Activated B cell treated with CpG ODN at 0.5 μM for 24 hours (primary cell): ENCODE measurements at regions of chr13 and their contacts with region 1.

Region 1: DNA sequence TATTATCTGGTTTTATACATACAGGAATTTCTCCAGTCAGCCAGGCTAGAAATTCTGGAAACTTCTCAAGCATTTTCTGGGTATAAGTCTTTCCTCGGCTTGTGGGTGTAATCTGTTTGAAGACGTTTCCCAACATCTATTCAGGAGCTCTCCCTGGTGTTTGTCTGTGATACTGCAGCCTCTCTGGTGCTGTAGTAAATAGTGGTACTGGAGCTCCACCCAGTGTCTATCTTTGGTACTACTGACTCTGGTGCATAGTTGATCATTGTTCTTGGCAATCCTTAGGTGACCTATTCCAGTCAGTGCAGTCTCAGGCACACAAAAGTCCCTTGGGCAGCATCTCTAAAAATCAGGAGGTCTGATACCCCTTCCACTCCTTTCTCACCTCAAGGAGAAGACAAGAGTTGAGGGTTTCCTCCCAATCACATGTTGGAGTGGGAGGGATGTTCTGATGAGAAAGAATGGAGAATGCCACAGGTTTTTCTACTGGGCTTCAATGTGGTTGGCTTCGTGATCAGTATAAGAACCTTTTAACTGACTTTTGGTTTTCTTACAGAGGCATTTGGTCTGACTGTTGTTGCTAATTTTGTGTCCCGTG is 115.5 kb downstream of the CYSLTR2 start:
- DNase-seq: peak; percentile 25
- ATAC-seq: peak; percentile 100
- H3K4me3 Mint-ChIP-seq: no peak overlapping the region
- H3K27ac Mint-ChIP-seq: no peak overlapping the region
- H3K4me1 Mint-ChIP-seq: peaks cover 2% of the 10 kb centered on the region
- H3K27me3 Mint-ChIP-seq: peaks cover 17% of the 10 kb centered on the region
- CTCF ChIP-seq: peak; percentile 38

Region 2: DNA sequence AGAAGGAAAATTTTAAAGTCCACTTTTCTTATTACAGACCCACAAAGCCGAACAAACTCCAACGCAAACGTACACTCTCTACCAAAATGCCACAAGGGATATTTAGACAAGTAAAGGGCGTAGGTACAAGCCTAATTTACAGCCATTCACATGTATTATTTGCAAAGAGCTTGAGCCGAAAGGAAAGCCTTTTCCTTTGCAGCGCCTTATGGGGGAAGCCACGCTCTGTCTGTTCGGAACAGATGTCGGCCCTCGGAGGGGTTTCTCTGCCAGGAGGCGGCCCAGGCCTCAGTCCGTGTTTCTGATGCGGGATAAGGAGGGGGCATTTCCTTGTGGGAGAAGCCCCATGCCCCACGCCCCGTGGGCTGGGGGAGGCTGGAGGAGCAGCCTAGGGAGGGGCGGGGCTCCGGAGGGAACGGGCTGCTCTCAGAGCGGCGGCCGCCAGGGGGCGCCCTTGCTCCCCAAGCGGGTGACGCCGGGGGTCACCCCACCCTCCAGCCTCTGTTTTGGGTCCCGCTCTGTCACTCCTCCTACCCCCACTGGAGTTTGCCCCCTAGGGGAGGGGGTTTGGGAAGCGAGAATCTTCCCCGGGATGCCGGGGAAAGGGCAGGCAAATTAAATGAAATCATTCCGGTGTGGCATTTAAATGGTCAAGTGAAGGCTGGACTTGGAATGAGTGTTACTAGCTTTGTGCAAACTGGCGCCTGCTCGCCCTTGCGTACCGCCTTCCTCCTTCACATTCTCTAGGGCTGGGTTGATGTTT is 1875.2 kb before region 1 on chr13:
- CTCF ChIA-PET with region 1: interaction called, 8 read pairs
- POLR2A ChIA-PET with region 1: no interaction called
- intact Hi-C with region 1: loop called (anchors 1 kb)
- DNase-seq: peak; percentile 67
- ATAC-seq: peak; percentile 91
- H3K4me3 Mint-ChIP-seq: peak overlapping the region; percentile 74
- H3K27ac Mint-ChIP-seq: no peak overlapping the region
- H3K4me1 Mint-ChIP-seq: peaks cover 24% of the 10 kb centered on the region
- H3K27me3 Mint-ChIP-seq: peaks cover 32% of the 10 kb centered on the region
- CTCF ChIP-seq: peak; percentile 72

Region 3: DNA sequence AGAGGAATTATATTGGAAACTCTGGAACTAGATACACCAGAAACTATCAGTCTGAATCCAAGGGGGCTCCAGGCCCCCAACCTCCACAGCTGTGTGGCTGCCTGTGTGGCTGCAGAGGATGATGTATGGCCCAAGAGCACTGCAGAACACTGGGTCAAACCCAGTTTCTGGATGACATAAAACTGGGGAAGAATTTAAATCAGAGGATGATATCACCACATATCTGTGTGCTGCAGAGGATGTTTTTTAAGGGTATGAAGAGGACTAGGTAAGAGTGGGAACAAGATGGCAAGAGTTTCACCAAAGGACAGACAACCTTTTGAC is 994.6 kb before region 1 on chr13:
- CTCF ChIA-PET with region 1: no interaction called
- POLR2A ChIA-PET with region 1: no interaction called
- intact Hi-C with region 1: loop called (anchors 1 kb)
- DNase-seq: no peak
- ATAC-seq: no peak
- H3K4me3 Mint-ChIP-seq: no peak overlapping the region
- H3K27ac Mint-ChIP-seq: no peak overlapping the region
- H3K4me1 Mint-ChIP-seq: no peaks in the 10 kb centered on the region
- H3K27me3 Mint-ChIP-seq: peaks cover 9% of the 10 kb centered on the region
- CTCF ChIP-seq: no peak

Region 4: DNA sequence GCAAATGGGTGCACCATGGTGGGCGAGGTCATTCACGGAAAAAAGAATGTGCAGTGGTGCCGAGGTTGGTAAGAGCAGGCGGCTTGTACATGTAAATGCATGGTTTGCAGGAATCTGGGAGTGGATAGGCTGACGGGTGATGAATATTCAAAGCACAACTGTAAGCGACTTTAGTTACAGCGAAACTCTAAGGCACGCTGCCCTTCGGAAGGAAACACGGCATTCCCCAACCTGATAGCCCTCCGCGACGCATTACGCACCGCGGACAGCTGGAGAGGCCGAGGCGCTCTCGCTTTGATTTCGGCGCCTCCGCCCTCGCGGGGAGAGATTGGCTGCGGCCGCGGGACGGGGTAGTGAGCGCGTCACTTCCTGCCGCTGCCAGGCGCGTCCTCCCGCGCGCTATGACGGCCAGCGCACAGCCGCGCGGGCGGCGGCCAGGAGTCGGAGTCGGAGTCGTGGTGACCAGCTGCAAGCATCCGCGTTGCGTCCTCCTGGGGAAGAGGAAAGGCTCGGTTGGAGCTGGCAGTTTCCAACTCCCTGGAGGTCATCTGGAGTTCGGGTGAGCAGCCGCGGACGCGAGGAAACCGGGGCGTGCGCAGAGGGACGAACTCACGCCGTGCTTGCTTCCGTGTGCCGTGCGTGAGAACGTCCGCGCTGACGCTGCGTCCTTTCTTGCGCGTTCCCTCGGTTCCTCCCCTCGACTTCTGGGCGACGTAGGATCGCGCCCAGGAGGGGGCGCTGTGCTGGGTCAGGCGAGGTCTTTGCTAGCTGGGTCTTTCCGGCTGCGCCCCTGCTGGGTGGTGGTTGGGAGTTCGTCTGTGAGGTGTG is 731.6 kb before region 1 on chr13 and contains the start of gene NUDT15:
- CTCF ChIA-PET with region 1: interaction called, 15 read pairs
- POLR2A ChIA-PET with region 1: no interaction called
- intact Hi-C with region 1: loop called (anchors 1 kb)
- DNase-seq: peak; percentile 92
- ATAC-seq: peak; percentile 94
- H3K4me3 Mint-ChIP-seq: peak within 1 kb of the TSS; percentile 93
- H3K27ac Mint-ChIP-seq: peak within 1 kb of the TSS; percentile 96
- H3K4me1 Mint-ChIP-seq: peaks cover 29% of the 10 kb centered on the region
- H3K27me3 Mint-ChIP-seq: no peaks in the 10 kb centered on the region
- CTCF ChIP-seq: peak; percentile 83
- total RNA-seq, gene NUDT15: 5.5 and 6.2 TPM in 2 replicates

Region 5: DNA sequence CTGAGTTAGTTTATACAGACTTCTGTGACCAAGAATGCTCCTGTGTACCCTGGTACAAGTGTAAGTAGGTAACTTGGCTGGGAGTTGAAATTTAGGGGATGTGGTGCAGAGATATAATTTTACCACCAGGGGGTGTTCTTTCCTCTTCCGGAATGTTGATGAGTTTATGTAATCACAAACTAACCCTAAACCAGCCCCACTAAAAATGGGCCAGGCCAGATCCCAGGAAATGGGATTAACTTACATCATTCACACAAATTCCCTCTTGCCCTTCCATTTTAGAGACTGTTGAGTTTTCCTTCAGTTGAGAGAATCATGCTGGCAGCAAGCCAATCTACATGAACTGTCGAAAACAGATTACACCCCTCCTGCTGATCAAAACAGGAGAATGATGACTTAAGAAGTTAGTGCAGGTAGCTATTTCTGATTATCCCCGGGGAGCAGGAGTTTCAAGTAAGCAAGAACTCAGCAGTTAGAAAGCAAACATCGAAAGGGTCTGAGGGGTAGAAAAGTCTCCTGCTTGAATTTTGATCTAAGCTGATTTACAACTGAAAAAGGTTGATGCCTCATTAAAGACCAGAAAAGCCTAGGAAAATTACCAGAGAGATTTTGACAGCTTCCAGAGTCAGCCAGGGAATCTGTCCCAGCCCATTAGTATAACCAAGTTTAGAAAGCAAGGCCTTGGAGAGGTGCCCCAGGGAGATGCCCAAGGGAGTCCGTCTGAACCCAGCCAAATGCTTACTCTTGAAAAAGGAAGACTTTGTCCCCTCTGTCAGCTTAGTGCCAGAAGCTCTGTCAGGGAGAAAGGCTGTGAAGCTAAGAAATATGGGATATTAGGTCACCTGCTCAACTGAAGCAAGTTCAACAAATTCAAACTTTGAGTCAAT is 642.0 kb before region 1 on chr13:
- CTCF ChIA-PET with region 1: interaction called, 18 read pairs
- POLR2A ChIA-PET with region 1: no interaction called
- intact Hi-C with region 1: loop called (anchors 1 kb)
- DNase-seq: no peak
- ATAC-seq: peak; percentile 90
- H3K4me3 Mint-ChIP-seq: no peak overlapping the region
- H3K27ac Mint-ChIP-seq: peak overlapping the region; percentile 9
- H3K4me1 Mint-ChIP-seq: peaks cover 7% of the 10 kb centered on the region
- H3K27me3 Mint-ChIP-seq: no peaks in the 10 kb centered on the region
- CTCF ChIP-seq: peak; percentile 74

Region 6: DNA sequence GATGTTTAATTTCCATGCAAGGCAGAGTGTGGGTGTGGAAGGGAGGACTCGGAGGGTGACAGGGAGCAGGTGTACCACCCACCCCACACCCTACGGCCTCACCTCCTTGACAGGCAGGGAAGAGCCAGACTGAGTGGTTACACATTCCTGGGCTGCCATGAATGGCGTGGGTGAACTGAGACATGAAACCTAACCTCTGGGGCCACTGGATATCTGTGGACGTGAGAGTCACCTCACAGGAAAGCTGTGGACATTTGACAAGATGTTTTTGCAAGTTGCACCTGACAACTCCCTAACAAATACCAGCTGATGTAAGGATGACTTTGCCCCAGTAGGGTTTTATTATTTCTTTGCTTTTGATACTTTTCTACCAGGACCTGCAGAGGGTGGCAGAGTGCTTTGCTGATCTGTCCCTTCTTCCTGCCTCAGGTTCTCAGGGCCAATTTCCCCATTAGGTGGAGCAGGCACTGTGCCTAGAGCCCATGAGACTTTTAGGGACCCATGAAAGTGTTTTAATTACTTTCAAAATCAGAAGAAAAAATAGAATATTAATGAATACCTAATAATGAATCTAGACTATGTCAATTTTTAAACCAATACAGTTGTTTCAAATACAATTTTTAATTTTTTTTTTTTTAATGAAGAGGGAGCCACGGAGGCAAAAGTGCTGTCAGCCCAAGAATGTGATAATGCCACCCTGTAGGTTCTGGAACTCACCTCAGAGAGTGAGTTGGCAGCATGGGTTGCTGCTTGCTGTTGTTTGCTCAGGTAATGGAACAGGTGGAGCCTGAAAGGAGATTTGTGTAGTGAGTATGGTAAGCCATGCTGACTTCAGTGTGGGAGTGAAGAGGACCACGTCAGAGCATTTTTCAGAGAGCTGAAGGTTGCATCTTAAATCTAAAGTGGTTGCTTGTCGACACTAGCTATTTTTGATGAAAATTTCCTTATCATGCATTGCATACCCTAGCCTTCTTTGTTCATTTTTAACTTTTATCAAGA is 173.5 kb before region 1 on chr13:
- CTCF ChIA-PET with region 1: interaction called, 5 read pairs
- POLR2A ChIA-PET with region 1: no interaction called
- intact Hi-C with region 1: loop called (anchors 1 kb)
- DNase-seq: no peak
- ATAC-seq: no peak
- H3K4me3 Mint-ChIP-seq: no peak overlapping the region
- H3K27ac Mint-ChIP-seq: no peak overlapping the region
- H3K4me1 Mint-ChIP-seq: no peaks in the 10 kb centered on the region
- H3K27me3 Mint-ChIP-seq: peaks cover 21% of the 10 kb centered on the region
- CTCF ChIP-seq: no peak

Region 7: GRCh38 chr13:48783181-48783630 is 14.0 kb after region 1 on chr13:
- CTCF ChIA-PET with region 1: no interaction called
- POLR2A ChIA-PET with region 1: no interaction called
- intact Hi-C with region 1: no loop called
- DNase-seq: no peak
- ATAC-seq: no peak
- H3K4me3 Mint-ChIP-seq: no peak overlapping the region
- H3K27ac Mint-ChIP-seq: no peak overlapping the region
- H3K4me1 Mint-ChIP-seq: no peaks in the 10 kb centered on the region
- H3K27me3 Mint-ChIP-seq: peaks cover 7% of the 10 kb centered on the region
- CTCF ChIP-seq: no peak